Activated naive CD4-positive, alpha-beta T cell treated with anti-CD3 and anti-CD28 coated beads, Interleukin-2, amount 10 ng/mL, durations not matched to agents 7 days and 5 days (primary cell): ENCODE measurements at regions of chr1 and their contacts with region 1.

Region 1: GRCh38 chr1:171801487-171801891 is 20.0 kb downstream of the METTL13 start:
- DNase-seq: no peak
- H3K4me3 Mint-ChIP-seq: no peak overlapping the region
- H3K27ac Mint-ChIP-seq: no peak overlapping the region
- H3K4me1 Mint-ChIP-seq: peaks cover 6% of the 10 kb centered on the region
- H3K27me3 Mint-ChIP-seq: peaks cover 1% of the 10 kb centered on the region

Region 2: GRCh38 chr1:171550050-171550449 is 251.4 kb before region 1 on chr1:
- CTCF ChIA-PET with region 1: no interaction called
- DNase-seq: no peak
- H3K4me3 Mint-ChIP-seq: no peak overlapping the region
- H3K27ac Mint-ChIP-seq: no peak overlapping the region
- H3K4me1 Mint-ChIP-seq: peaks cover 5% of the 10 kb centered on the region
- H3K27me3 Mint-ChIP-seq: no peaks in the 10 kb centered on the region

Region 3: GRCh38 chr1:171741872-171742576 is 59.5 kb before region 1 on chr1 and contains the start of gene VAMP4:
- CTCF ChIA-PET with region 1: interaction called, 27 read pairs
- DNase-seq: peak; percentile 91
- H3K4me3 Mint-ChIP-seq: peak within 1 kb of the TSS; percentile 94
- H3K27ac Mint-ChIP-seq: peak within 1 kb of the TSS; percentile 100
- H3K4me1 Mint-ChIP-seq: peaks cover 55% of the 10 kb centered on the region
- H3K27me3 Mint-ChIP-seq: no peaks in the 10 kb centered on the region

Region 4: DNA sequence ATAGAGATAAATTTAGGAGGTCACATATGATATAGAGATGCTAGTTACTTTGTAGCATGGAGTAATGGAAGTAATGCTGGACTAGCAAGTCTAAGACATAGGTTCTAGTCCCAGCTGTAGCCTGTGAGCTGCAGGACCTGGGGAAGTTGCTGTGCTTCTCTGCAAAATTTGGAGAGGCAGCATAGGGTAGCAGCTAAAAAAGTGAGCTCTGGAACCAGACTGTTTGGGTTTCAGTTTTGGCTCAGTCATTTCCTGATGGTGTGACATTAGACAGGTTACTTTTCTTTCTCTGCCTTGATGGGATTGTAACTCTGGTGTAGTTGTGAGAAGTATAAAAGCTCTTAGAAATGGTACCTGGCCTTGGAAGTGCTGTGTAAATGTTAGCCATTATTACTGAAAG is 16.7 kb before region 1 on chr1:
- CTCF ChIA-PET with region 1: interaction called, 18 read pairs
- DNase-seq: peak; percentile 27
- H3K4me3 Mint-ChIP-seq: peak overlapping the region; percentile 62
- H3K27ac Mint-ChIP-seq: peak overlapping the region; percentile 89
- H3K4me1 Mint-ChIP-seq: peaks cover 65% of the 10 kb centered on the region
- H3K27me3 Mint-ChIP-seq: no peaks in the 10 kb centered on the region

Region 5: GRCh38 chr1:171817511-171818265 is 16.2 kb after region 1 on chr1:
- CTCF ChIA-PET with region 1: interaction called, 23 read pairs
- DNase-seq: peak; percentile 27
- H3K4me3 Mint-ChIP-seq: no peak overlapping the region
- H3K27ac Mint-ChIP-seq: no peak overlapping the region
- H3K4me1 Mint-ChIP-seq: peaks cover 11% of the 10 kb centered on the region
- H3K27me3 Mint-ChIP-seq: no peaks in the 10 kb centered on the region

Region 6: DNA sequence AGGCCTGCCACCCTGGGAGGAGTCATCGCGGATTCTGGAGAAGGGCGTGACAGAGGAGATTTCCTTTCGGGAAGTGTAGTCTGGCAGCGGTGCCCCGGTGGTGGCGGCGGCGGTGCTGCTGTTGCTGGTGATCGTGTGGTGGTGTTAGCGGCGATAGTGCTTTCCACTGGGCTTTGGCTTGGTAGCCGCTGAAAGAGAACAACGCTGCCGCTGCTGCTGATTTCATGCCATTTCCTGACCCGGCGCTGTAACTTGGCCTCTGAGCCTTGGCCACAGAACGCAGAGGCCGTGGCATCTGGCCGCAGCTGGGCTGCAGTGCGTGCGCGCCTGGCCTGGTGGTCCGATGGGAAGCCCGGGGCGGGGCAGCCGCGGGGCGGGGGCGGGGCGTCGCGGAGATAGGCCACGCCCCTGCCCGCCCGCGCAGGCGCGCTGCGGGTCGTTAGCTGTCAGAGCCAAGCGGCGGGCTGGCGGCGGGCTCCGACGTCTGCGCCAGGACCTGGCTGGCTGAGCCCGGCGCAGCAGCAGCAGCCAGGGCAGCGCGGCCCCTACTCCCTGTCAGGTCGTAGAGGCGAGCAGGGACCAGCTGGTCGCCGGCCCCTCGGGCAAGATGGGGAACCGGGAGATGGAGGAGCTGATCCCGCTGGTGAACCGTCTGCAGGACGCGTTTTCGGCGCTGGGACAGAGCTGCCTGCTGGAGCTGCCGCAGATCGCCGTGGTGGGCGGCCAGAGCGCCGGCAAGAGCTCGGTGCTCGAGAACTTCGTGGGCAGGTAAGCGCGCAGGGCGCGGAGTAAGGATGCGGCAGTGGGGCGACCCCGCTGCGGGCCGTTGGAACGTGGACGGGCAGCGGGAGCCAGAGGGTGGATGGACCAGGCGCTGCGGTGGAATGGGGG is 39.8 kb after region 1 on chr1 and contains the start of gene DNM3:
- CTCF ChIA-PET with region 1: interaction called, 13 read pairs
- DNase-seq: peak; percentile 79
- H3K4me3 Mint-ChIP-seq: peak within 1 kb of the TSS; percentile 68
- H3K27ac Mint-ChIP-seq: peak within 1 kb of the TSS; percentile 53
- H3K4me1 Mint-ChIP-seq: peaks cover 13% of the 10 kb centered on the region
- H3K27me3 Mint-ChIP-seq: peaks cover 37% of the 10 kb centered on the region

Region 7: GRCh38 chr1:171984850-171985485 is 183.5 kb after region 1 on chr1:
- CTCF ChIA-PET with region 1: interaction called, 183 read pairs
- DNase-seq: no peak
- H3K4me3 Mint-ChIP-seq: no peak overlapping the region
- H3K27ac Mint-ChIP-seq: no peak overlapping the region
- H3K4me1 Mint-ChIP-seq: no peaks in the 10 kb centered on the region
- H3K27me3 Mint-ChIP-seq: no peaks in the 10 kb centered on the region

Region 8: DNA sequence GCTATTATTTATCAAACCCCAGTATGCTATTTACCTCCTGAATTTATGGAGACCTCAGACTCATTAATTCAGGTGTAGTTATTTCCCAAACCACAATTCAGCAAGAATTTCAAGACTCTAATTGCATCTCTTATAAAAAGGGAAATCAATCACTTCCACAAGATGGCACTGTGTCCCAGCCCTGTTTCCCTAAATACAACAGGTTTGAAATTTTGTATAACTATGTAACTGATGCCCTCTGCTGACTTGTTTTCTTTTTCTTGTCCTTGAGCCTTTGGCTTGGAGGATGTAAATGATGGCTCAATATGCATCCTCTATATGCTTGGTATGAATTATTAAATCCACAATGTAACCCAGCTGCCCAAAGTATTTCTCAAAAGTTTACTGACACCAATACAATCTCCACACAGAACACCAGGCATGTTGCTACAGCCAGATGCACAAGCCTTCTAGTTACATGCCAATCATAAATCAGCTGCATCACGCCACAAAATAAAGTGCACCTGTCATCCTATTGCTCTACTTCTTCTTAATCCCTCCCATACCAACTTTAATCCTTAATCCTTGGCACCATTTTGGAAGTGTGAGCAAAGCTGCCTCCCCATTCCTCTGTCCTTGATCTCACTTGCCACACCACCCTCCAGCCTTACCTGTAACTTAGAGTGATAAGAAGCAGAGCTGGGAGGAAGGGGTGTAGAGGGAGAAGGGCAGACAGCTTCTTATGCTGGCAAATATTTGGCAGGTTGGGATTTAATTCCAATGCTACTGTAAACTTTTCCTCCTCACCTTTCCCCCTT is 628.0 kb after region 1 on chr1:
- CTCF ChIA-PET with region 1: interaction called, 10 read pairs
- DNase-seq: peak; percentile 73
- H3K4me3 Mint-ChIP-seq: no peak overlapping the region
- H3K27ac Mint-ChIP-seq: peak overlapping the region; percentile 43
- H3K4me1 Mint-ChIP-seq: peaks cover 25% of the 10 kb centered on the region
- H3K27me3 Mint-ChIP-seq: no peaks in the 10 kb centered on the region